Activated CD4-positive, alpha-beta T cell treated with anti-CD3 and anti-CD28 coated beads for 36 hours (primary cell): ENCODE measurements at regions of chr16 and their contacts with region 1.

Region 1: DNA sequence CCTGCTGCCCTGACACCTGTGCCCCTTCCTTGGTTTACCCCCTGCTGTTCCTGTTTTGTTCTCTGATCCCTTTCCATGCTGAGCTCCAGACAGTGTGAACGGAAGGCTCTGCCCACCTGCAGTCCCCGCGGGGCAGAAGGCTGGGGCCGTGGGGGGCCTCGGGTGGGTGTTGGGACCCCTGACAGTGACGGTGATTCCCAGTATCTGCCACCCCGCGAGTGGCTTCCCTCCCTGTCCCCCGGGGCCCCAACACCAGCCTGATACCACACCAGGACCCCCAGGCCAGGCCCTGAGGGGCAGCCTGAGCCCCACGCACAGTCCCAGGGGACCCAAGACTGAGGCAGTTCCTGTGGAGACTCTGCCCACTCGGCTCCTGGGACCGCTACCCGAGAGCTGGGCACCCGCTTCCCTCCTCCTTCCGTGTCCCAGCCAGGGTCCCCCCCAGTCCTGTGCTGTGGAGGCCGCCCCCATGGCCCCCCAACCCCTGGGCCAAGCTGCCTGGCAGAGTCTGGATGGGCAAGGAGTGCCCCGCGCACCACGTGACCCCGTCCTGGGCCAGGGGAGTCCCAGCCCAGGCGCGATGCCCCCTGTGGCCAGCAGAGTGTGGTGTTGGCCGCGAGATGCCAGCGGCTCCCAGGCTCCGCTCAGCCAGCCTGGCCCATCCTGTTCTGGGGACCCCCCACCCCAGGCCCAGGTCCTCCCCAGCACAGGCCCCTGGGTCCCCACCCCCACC is 10.0 kb upstream of the C1QTNF8 start:
- DNase-seq: peak; percentile 74
- ATAC-seq: peak; percentile 82
- H3K4me3 Mint-ChIP-seq: no peak overlapping the region
- H3K27ac Mint-ChIP-seq: no peak overlapping the region
- H3K4me1 Mint-ChIP-seq: no peaks in the 10 kb centered on the region
- H3K27me3 Mint-ChIP-seq: peaks cover 10% of the 10 kb centered on the region

Region 2: GRCh38 chr16:813204-813915 is 292.7 kb before region 1 on chr16:
- CTCF ChIA-PET with region 1: interaction called, 4 read pairs
- POLR2A ChIA-PET with region 1: no interaction called
- intact Hi-C with region 1: loop called (anchors 1 to 2 kb)
- DNase-seq: peak; percentile 76
- ATAC-seq: peak; percentile 87
- H3K4me3 Mint-ChIP-seq: no peak overlapping the region
- H3K27ac Mint-ChIP-seq: no peak overlapping the region
- H3K4me1 Mint-ChIP-seq: peaks cover 4% of the 10 kb centered on the region
- H3K27me3 Mint-ChIP-seq: peaks cover 15% of the 10 kb centered on the region

Region 3: DNA sequence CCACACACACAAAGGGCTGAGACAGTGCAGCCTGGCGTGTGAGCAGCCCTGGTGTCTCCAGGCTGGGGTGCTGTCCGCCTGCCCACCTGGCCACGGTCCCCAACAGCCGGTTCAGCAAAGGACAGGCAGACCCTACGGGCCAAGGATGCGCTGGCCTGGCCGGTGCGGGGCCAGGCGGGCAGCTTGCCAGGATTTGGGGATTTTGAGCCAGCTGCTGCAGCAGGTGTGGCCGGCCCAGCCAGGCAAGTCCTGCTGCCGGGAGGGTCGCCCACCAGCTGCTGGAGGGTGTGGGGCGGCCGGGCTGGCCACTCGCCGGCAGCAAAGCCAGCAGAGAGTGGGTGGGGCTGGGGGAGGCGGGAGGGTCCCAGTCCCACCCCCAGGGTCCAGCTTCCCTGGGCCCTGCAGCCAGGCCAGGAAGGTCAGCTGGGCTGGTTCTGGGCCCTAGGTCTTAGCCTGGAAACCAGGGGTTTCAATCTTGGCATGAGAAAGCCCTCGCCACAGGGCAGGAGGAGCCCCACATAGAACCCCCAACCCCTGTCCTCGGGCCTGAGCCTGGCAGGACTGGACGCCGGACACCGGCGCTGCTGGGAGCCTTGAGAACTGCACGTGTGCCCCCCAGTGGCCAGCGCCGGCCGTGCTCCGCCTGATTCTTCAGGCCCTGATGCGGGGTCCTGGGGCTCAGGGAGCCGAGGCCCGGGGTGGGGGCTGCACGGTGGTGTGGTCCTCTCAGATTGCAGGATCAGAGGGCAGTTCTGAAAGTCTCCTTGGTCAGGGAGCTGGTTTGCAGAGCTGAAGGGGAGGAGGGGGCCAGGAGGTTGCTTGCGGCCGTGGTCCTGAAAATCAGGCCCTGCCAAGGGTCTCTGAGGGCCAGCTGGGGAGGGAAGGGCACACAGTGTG is 51.1 kb before region 1 on chr16:
- CTCF ChIA-PET with region 1: interaction called, 5 read pairs
- POLR2A ChIA-PET with region 1: no interaction called
- intact Hi-C with region 1: loop called in 1 of 2 experiments (anchors 1 kb)
- DNase-seq: peak; percentile 65
- ATAC-seq: peak; percentile 59
- H3K4me3 Mint-ChIP-seq: no peak overlapping the region
- H3K27ac Mint-ChIP-seq: no peak overlapping the region
- H3K4me1 Mint-ChIP-seq: no peaks in the 10 kb centered on the region
- H3K27me3 Mint-ChIP-seq: peaks cover 3% of the 10 kb centered on the region

Region 4: GRCh38 chr16:1194665-1195392 is 88.8 kb after region 1 on chr16:
- CTCF ChIA-PET with region 1: no interaction called
- POLR2A ChIA-PET with region 1: no interaction called
- intact Hi-C with region 1: loop called (anchors 1 to 2 kb)
- DNase-seq: peak; percentile 49
- ATAC-seq: peak; percentile 43
- H3K4me3 Mint-ChIP-seq: no peak overlapping the region
- H3K27ac Mint-ChIP-seq: no peak overlapping the region
- H3K4me1 Mint-ChIP-seq: no peaks in the 10 kb centered on the region
- H3K27me3 Mint-ChIP-seq: no peaks in the 10 kb centered on the region

Region 5: GRCh38 chr16:1564325-1564724 is 458.3 kb after region 1 on chr16:
- CTCF ChIA-PET with region 1: no interaction called
- POLR2A ChIA-PET with region 1: no interaction called
- intact Hi-C with region 1: no loop called
- DNase-seq: no peak
- ATAC-seq: no peak
- H3K4me3 Mint-ChIP-seq: no peak overlapping the region
- H3K27ac Mint-ChIP-seq: no peak overlapping the region
- H3K4me1 Mint-ChIP-seq: peaks cover 28% of the 10 kb centered on the region
- H3K27me3 Mint-ChIP-seq: no peaks in the 10 kb centered on the region

Region 6: DNA sequence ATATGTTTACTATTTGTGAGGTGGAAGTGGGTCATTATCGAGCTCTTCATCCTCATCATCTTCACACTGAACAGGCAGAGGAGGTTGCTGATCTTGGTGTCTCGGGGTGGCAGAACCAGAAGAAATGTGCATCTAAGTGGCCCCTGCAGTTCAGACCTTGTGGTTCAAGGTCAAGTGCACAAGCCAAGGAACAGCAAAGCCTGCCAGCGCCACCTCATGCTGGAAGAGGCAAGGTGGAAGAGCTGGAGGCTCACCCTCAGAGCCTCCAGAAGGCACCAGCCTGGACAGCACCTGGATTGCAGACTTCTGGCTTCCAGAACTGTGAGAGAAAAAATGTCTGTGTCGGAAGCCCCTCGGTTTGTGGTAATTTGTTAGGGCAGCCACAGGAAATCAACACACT is 473.1 kb after region 1 on chr16:
- CTCF ChIA-PET with region 1: no interaction called
- POLR2A ChIA-PET with region 1: no interaction called
- intact Hi-C with region 1: no loop called
- DNase-seq: peak; percentile 25
- ATAC-seq: no peak
- H3K4me3 Mint-ChIP-seq: no peak overlapping the region
- H3K27ac Mint-ChIP-seq: no peak overlapping the region
- H3K4me1 Mint-ChIP-seq: no peaks in the 10 kb centered on the region
- H3K27me3 Mint-ChIP-seq: no peaks in the 10 kb centered on the region